ENCODE measurements at regions of chr5 and their contacts with region 1.

Region 1: DNA sequence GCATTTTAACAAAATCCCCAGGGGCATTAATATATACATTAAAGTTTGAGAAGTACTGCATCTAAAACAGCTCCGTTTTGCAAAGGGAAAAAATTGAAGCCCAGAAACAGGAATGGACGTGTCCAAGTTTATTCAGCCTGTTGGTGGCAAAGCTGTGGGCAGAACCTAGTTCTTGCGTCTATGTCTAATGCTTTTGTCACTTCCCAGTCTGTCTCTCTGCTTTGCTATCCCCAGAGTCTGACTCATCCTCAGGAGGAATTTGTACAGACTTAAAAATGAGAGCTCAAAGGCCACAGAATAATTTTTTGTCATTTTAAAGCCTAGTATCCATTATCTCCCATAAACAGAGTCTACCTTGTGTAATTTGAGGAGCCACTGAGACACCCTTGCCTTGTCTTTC is 330.9 kb upstream of the GRIA1 start:
- DNase-seq: peak; percentile 87
- H3K4me3 ChIP-seq: no peak overlapping the region
- H3K27ac ChIP-seq: peak overlapping the region; percentile 77
- H3K4me1 ChIP-seq: peaks cover 35% of the 10 kb centered on the region
- H3K27me3 ChIP-seq: no peaks in the 10 kb centered on the region
- CTCF ChIP-seq: no peak

Region 2: DNA sequence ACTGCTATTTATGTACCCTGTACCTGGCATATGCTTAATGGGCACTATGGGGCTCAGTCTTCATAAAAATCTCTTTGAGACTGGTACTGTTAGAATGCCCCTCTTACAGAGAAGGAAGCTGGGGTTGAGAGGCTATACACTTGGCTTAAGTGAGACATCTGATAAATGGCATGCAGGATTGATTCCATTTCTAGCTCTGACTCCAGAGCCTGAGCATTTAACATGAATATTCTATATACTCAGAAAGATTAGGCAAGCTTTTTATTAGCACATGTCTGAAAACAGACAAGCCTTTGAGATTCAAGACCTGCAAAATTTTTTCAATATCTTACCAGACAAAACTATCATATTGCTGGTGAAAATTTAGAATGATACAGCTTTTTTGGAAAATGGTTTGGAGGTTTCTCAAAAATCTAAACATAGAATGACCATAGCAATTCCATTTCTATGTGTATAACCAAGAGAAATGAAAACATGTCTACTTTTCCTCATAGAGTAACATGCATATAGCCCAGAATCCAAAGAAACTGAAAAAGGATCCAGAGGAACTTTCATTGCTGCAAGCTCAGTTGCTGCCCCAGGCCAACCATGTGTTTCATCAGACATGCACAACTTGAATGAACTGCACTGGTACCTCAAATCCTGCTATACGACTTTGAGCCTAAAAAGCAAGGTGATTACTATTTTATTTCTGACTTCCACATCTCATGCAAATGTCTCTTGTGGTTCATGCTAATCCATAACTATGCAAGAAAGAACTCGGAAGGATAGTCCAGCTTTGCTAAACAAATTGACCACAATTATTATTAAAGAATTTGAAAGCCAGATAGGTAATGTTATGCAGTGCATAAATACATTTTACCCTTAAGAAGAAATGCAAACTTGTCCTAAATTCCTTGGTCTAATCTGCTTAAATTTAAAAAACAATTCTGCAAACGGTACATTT is 58.1 kb before region 1 on chr5:
- CTCF ChIA-PET with region 1: no interaction called
- dilution Hi-C with region 1: no loop called
- in situ Hi-C with region 1: no loop called
- intact Hi-C with region 1: no loop called
- DNase-seq: no peak
- H3K4me3 ChIP-seq: no peak overlapping the region
- H3K27ac ChIP-seq: no peak overlapping the region
- H3K4me1 ChIP-seq: no peaks in the 10 kb centered on the region
- H3K27me3 ChIP-seq: no peaks in the 10 kb centered on the region
- CTCF ChIP-seq: no peak

Region 3: DNA sequence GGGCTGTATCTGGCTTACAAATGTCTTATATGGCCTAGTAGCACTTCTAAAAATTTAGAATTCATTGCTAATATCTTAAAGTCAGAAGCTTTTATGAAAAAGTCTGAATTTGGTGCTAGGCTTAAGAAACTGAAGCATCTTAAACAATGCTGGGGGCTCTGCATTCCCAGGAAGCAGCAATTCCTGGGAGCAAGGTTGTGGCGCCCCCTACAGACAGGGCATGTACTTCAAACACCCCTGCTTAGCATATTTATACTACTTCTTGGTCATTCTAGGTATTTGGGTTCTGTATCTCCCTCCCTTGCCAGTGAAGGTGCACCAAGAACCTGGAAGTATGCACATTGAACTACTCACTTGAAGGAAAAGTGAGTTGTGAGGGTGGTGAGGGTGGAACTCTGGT is 266.3 kb after region 1 on chr5:
- CTCF ChIA-PET with region 1: no interaction called
- dilution Hi-C with region 1: no loop called
- in situ Hi-C with region 1: no loop called
- intact Hi-C with region 1: loop called (anchors 1 kb)
- DNase-seq: peak; percentile 11
- H3K4me3 ChIP-seq: no peak overlapping the region
- H3K27ac ChIP-seq: no peak overlapping the region
- H3K4me1 ChIP-seq: no peaks in the 10 kb centered on the region
- H3K27me3 ChIP-seq: peaks cover 2% of the 10 kb centered on the region
- CTCF ChIP-seq: peak; percentile 79 to 81

Region 4: GRCh38 chr5:153711755-153712154 is 552.1 kb after region 1 on chr5:
- CTCF ChIA-PET with region 1: no interaction called
- dilution Hi-C with region 1: no loop called
- in situ Hi-C with region 1: no loop called
- intact Hi-C with region 1: loop called (anchors 10 kb)
- DNase-seq: no peak
- H3K4me3 ChIP-seq: no peak overlapping the region
- H3K27ac ChIP-seq: no peak overlapping the region
- H3K4me1 ChIP-seq: no peaks in the 10 kb centered on the region
- H3K27me3 ChIP-seq: no peaks in the 10 kb centered on the region
- CTCF ChIP-seq: peak in 1 of 2 donors; percentile 30

Region 5: GRCh38 chr5:153756540-153756939 is 596.9 kb after region 1 on chr5:
- CTCF ChIA-PET with region 1: no interaction called
- dilution Hi-C with region 1: no loop called
- in situ Hi-C with region 1: no loop called
- intact Hi-C with region 1: loop called (anchors 5 kb)
- DNase-seq: peak; percentile 14
- H3K4me3 ChIP-seq: no peak overlapping the region
- H3K27ac ChIP-seq: no peak overlapping the region
- H3K4me1 ChIP-seq: peaks cover 15% of the 10 kb centered on the region
- H3K27me3 ChIP-seq: no peaks in the 10 kb centered on the region
- CTCF ChIP-seq: peak; percentile 23 to 40

Measured in mammary epithelial cell (primary cell).